CD4-positive, alpha-beta memory T cell (primary cell): ENCODE measurements at regions of chr1 and their contacts with region 1.

Region 1: GRCh38 chr1:1115786-1116700 is at the start of gene C1orf159:
- DNase-seq: peak; percentile 98
- H3K4me3 ChIP-seq: peak within 1 kb of the TSS in 1 of 2 donors; percentile 67
- H3K4me3 Mint-ChIP-seq: peak within 1 kb of the TSS; percentile 79 to 95 (median 86)
- H3K27ac ChIP-seq: peak within 1 kb of the TSS; percentile 71
- H3K27ac Mint-ChIP-seq: peak within 1 kb of the TSS; percentile 77 to 93 (median 82)
- H3K4me1 ChIP-seq: peaks cover 11% of the 10 kb centered on the region
- H3K4me1 Mint-ChIP-seq: peaks cover 3 to 18% (median 8%) of the 10 kb centered on the region in 4 donors
- H3K27me3 ChIP-seq: no peaks in the 10 kb centered on the region
- H3K27me3 Mint-ChIP-seq: peaks cover 3 to 5% of the 10 kb centered on the region in 2 donors
- total RNA-seq, gene C1orf159: 15.0 to 15.1 TPM

Region 2: GRCh38 chr1:1040004-1040991 is 75.7 kb before region 1 on chr1:
- CTCF ChIA-PET with region 1: no interaction called
- POLR2A ChIA-PET with region 1: no interaction called
- intact Hi-C with region 1: loop called (anchors 5 kb)
- DNase-seq: peak; percentile 76 to 86 (median 80)
- H3K4me3 ChIP-seq: peak overlapping the region in 1 of 2 donors; percentile 70
- H3K4me3 Mint-ChIP-seq: peak overlapping the region; percentile 59 to 83 (median 67)
- H3K27ac ChIP-seq: no peak overlapping the region
- H3K27ac Mint-ChIP-seq: peak overlapping the region in 2 of 7 donors; percentile 58 to 69
- H3K4me1 ChIP-seq: peaks cover 17% of the 10 kb centered on the region
- H3K4me1 Mint-ChIP-seq: peaks cover 5 to 17% (median 11%) of the 10 kb centered on the region in 4 donors
- H3K27me3 ChIP-seq: peaks cover 7% of the 10 kb centered on the region
- H3K27me3 Mint-ChIP-seq: peaks cover 10 to 12% of the 10 kb centered on the region in 2 donors

Region 3: DNA sequence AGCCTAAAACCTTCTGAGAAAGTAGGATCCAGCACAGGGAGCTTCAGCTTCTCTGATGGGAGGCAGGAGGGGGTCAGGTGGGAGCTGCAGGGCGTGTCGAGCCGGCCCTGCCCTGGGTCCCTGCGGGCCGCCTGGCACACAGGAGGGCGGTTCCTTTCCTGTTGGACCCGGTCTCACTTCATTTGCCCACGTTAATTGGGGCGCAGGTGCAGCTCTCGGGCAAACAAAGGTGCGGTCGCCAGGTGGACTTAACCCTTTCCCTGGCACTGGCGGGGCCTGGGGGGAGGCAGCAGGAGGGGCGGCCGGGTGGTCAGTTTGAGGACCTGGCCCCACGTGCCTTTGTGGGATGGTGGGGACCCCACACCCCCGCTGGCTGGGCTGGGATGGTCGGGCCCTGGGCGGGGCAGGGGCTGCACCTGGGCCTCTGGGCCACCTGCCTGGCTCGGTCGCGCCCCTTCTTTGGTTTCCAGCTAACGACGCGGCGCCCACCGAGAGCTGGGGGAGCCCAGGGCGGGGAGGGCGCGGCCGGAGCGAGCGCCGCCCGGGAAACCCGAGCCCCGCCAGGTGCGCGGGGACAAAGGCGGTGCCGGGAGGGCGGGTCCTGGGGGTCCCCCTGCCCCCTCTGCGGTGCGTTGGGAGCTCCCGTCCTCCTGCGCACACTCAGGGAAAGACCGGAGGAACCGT is 20.6 kb after region 1 on chr1:
- CTCF ChIA-PET with region 1: no interaction called
- POLR2A ChIA-PET with region 1: no interaction called
- intact Hi-C with region 1: no loop called
- DNase-seq: peak in 3 of 5 donors; percentile 16 to 38 (median 30)
- H3K4me3 ChIP-seq: no peak overlapping the region
- H3K4me3 Mint-ChIP-seq: peak overlapping the region in 6 of 8 donors; percentile 39 to 77 (median 60)
- H3K27ac ChIP-seq: peak overlapping the region; percentile 14
- H3K27ac Mint-ChIP-seq: peak overlapping the region in 6 of 7 donors; percentile 35 to 91 (median 81)
- H3K4me1 ChIP-seq: peaks cover 24% of the 10 kb centered on the region
- H3K4me1 Mint-ChIP-seq: peaks cover 4 to 25% (median 9%) of the 10 kb centered on the region in 4 donors
- H3K27me3 ChIP-seq: no peaks in the 10 kb centered on the region
- H3K27me3 Mint-ChIP-seq: no peaks in the 10 kb centered on the region

Region 4: DNA sequence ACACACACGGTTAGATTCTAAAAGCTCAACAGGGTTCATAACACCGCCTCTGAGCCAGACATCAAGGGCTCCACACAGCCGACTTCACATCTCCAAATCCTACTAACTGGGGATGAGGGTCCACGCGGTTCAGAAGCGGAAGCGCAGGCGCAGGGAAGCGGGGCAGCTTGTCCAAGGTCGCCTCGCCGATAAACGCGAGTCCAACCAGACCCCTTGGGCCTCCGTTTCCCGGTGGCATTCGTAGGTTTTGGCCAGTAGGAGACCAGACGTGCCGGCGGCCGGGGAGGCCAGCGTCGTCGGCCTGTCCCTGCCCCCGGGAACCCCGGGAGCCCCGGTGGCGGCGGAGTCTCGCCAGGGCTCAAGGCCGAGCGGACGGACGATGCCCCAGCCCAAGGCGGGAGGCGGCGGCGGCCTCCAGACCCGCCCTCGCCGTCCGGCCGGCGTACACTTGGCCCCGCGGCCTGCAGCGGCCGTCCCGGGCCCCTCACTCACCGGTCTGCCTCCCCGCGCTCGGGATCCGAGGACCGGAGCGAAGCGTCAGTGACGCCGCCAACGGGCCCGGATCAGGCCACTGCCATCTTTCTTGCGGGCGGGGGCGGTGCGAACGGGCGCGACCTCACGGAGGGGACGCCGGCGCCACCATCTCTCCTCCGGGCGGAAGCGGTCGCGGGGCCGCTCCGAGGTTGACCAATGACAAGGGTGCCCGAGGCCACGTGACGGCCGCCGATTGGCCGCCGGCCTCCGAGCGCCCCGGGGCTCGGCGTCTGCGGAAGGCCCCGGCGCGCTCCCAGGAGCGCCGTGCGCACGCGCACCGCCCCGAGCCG is 115.6 kb after region 1 on chr1 and contains the start of gene SDF4:
- CTCF ChIA-PET with region 1: no interaction called
- POLR2A ChIA-PET with region 1: interaction called, 7 read pairs
- intact Hi-C with region 1: loop called (anchors 2 kb)
- DNase-seq: peak; percentile 96 to 98 (median 96)
- H3K4me3 ChIP-seq: peak within 1 kb of the TSS; percentile 67 to 92
- H3K4me3 Mint-ChIP-seq: peak within 1 kb of the TSS; percentile 93 to 96 (median 94)
- H3K27ac ChIP-seq: peak within 1 kb of the TSS; percentile 96
- H3K27ac Mint-ChIP-seq: peak within 1 kb of the TSS; percentile 92 to 96 (median 95)
- H3K4me1 ChIP-seq: peaks cover 39% of the 10 kb centered on the region
- H3K4me1 Mint-ChIP-seq: peaks cover 15 to 49% (median 30%) of the 10 kb centered on the region in 4 donors
- H3K27me3 ChIP-seq: no peaks in the 10 kb centered on the region
- H3K27me3 Mint-ChIP-seq: no peaks in the 10 kb centered on the region
- total RNA-seq, gene SDF4: 125 to 138 TPM

Region 5: DNA sequence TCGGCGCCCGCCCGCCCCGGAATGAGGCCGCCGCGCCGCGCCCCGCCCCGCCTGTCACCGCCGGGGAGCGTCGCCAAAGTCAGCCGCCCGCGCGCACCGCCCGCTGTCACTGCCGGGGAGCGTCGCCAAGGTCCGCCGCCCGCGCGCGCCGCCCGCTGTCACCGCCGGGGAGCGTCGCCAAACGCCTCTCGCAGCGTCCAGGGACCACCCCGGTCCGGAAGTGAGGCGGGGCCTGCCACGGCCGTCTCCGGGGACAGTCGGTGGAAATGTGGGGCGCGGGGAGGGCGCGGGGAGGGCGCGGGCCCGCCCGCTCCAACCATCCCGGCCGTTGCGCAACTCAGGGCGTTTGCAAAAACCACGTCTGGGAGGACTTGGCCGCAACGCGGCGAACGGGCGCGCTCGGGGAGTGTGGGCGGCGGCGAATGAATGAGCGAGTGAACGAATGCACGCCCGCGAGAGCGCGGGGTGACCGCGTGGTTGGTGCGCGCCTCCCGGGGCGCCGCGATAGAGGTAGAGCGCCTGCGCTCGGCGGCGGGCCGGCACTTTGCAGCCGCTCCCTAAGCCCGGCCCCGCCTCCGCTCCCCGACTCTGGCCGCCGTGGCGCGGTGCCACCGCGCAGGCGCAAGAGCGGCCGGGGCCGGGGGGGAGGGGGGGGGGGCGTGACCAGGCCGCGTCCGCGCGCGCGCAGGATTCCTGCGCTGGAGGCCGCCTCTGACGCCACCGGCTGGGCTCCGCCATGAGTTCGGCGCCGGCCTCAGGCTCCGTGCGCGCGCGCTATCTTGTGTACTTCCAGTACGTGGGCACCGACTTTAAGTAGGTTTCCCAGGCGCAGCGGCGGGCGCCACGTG is 192.1 kb after region 1 on chr1 and contains the starts of genes ACAP3 and PUSL1:
- CTCF ChIA-PET with region 1: no interaction called
- POLR2A ChIA-PET with region 1: no interaction called
- intact Hi-C with region 1: loop called (anchors 1 kb)
- DNase-seq: peak; percentile 92 to 94 (median 92)
- H3K4me3 ChIP-seq: peak within 1 kb of the TSS; percentile 61 to 83
- H3K4me3 Mint-ChIP-seq: peak within 1 kb of the TSS; percentile 86 to 92 (median 89)
- H3K27ac ChIP-seq: peak within 1 kb of the TSS; percentile 77
- H3K27ac Mint-ChIP-seq: peak within 1 kb of the TSS; percentile 89 to 96 (median 91)
- H3K4me1 ChIP-seq: peaks cover 36% of the 10 kb centered on the region
- H3K4me1 Mint-ChIP-seq: peaks cover 13 to 29% (median 20%) of the 10 kb centered on the region in 4 donors
- H3K27me3 ChIP-seq: no peaks in the 10 kb centered on the region
- H3K27me3 Mint-ChIP-seq: no peaks in the 10 kb centered on the region
- total RNA-seq, gene ACAP3: 59.7 to 65.6 TPM
- total RNA-seq, gene PUSL1: 24.1 to 27.9 TPM

Region 6: DNA sequence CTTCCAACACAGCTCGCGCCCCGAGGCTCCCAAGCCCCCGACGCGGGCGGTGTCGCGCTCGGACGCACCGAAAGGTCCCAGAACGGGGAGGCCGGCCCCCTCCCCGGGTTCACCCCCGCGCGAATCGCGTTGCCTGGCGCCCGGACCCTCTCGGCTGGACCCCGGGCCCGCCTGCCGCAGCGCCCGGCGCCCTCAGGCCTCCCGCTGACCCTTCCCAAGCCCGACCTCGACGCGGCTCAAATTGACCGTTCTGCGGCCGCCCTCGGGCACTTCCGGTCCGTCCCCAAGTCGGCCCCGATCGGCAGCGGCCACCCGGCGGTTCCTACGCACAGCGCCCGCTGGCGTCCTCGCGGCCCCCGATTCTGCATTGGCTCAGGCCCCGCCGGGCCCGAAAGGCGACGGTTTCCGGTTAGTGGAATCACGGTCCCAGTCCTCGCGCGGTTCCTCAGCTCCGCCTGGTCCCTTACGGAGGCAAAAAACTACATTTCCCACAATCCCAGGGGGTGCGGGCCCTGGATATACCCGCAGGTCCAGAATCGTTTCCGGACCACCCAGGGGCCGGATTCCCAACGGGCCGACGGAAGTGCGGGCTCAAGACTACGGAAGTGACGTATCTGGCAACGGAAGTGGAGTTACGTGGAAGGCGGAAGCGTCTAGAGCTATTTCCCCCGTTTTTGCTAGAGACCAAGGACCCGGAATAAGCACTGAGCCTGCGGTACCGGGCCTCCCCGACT is 259.1 kb after region 1 on chr1 and contains the start of gene AURKAIP1:
- CTCF ChIA-PET with region 1: interaction called, 3 read pairs
- POLR2A ChIA-PET with region 1: interaction called, 22 read pairs
- intact Hi-C with region 1: loop called (anchors 1 kb)
- DNase-seq: peak; percentile 95 to 98 (median 97)
- H3K4me3 ChIP-seq: peak within 1 kb of the TSS; percentile 42 to 73
- H3K4me3 Mint-ChIP-seq: peak within 1 kb of the TSS; percentile 86 to 96 (median 92)
- H3K27ac ChIP-seq: peak within 1 kb of the TSS; percentile 88
- H3K27ac Mint-ChIP-seq: peak within 1 kb of the TSS in 6 of 7 donors; percentile 93 to 99 (median 98)
- H3K4me1 ChIP-seq: peaks cover 46% of the 10 kb centered on the region
- H3K4me1 Mint-ChIP-seq: peaks cover 6 to 44% (median 26%) of the 10 kb centered on the region in 4 donors
- H3K27me3 ChIP-seq: no peaks in the 10 kb centered on the region
- H3K27me3 Mint-ChIP-seq: no peaks in the 10 kb centered on the region
- total RNA-seq, gene AURKAIP1: 60.4 to 72.7 TPM